ENCODE measurements at regions of chr1 and their contacts with region 1.

Region 1: GRCh38 chr1:244065960-244066388 is 14.9 kb downstream of the ZBTB18 start:
- DNase-seq: no peak
- CTCF ChIP-seq: no peak

Region 2: GRCh38 chr1:244051053-244051444 is 14.9 kb before region 1 on chr1 and contains the start of gene ZBTB18:
- CTCF ChIA-PET with region 1: interaction called, 24 read pairs
- POLR2A ChIA-PET with region 1: interaction called, 4 read pairs
- DNase-seq: no peak
- CTCF ChIP-seq: no peak

Measured in GM10248 (cell line).